AG04449 (cell line): ENCODE measurements at regions of chr7 and their contacts with region 1.

Region 1: GRCh38 chr7:55212838-55213539 is 152.1 kb upstream of the LANCL2 start:
- DNase-seq: no peak
- H3K4me3 ChIP-seq: no peak overlapping the region
- CTCF ChIP-seq: no peak

Region 2: DNA sequence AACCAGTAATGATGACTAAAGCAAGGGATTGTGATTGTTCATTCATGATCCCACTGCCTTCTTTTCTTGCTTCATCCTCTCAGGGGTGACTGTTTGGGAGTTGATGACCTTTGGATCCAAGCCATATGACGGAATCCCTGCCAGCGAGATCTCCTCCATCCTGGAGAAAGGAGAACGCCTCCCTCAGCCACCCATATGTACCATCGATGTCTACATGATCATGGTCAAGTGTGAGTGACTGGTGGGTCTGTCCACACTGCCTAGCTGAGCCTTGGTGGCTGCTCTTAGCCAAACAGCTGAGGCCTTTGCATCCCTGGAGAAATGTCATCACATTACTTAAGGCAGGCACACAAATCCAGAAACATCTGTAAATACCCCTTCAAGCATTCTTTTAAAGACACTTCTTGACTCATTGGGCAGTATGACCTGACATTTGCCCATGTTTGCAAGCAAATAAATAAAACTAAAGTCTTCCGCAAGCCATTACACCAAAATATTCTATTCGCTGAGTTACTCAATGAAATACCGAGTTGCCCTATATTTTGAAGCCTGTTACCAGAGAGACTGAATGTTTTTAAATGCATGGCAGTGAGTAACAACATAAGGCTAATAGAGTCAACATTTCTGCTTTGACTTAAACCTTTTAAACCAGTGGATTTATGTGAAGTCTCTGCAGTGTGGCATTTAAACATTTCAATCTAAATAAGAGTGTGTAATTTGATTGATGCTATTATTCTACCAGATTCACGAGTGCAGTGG is 14.2 kb before region 1 on chr7:
- CTCF ChIA-PET with region 1: interaction called, 10 read pairs
- POLR2A ChIA-PET with region 1: no interaction called
- DNase-seq: no peak
- H3K4me3 ChIP-seq: no peak overlapping the region
- CTCF ChIP-seq: no peak

Region 3: GRCh38 chr7:55237156-55237893 is 24.3 kb after region 1 on chr7:
- CTCF ChIA-PET with region 1: no interaction called
- POLR2A ChIA-PET with region 1: no interaction called
- DNase-seq: no peak
- H3K4me3 ChIP-seq: no peak overlapping the region
- CTCF ChIP-seq: no peak